Activated CD4-positive, alpha-beta memory T cell treated with anti-CD3 and anti-CD28 coated beads for 36 hours (primary cell): ENCODE measurements at regions of chrX and their contacts with region 1.

Region 1: DNA sequence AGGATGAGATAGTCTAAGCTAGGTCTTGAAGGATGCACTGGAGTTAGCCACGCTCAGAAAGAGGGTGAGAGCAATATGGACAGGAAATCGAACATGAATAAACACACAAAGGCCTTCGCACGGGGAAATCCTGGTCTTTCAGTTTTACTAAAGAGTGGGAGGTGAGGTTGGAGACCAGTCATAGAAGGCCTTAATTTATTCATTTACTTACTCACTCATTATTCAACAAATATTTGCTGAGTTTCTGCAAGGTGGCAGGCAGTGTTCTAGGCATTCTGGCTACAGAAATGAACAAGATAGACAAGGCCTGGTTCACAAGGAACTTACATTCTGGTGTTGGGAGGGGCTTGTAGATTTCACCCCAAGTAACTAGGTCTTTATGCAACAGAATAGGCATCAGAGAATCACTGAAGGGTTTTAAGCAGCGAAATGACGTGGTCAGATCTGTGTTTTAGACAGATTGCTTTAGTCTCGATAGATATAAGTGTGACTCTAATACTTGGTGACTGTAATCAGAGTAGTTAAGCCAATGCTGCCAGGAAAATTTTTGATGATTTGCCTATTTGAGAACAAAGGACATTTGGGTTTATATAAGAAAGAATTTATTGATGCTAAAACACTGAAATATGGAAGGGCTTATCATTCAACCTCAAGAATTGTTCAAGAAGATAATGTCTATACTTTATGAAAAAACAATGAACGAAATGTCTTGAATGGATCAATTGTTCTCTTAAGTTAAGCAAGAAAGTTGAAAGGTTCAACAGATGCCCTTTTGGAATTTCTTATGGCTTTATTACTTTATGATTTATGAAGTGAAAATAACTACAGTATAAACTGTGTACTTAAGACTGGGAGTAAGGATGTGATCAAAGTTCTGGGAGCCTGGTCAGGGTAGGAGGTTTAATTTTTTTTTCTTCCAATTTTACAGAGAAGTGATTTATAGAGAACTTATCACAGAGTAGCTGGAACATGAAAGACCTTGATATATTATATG is 184.4 kb upstream of the CASK start:
- DNase-seq: peak; percentile 61
- H3K4me3 Mint-ChIP-seq: no peak overlapping the region
- H3K27ac Mint-ChIP-seq: peak overlapping the region; percentile 38
- H3K4me1 Mint-ChIP-seq: peaks cover 28% of the 10 kb centered on the region
- H3K27me3 Mint-ChIP-seq: no peaks in the 10 kb centered on the region

Region 2: GRCh38 chrX:41333744-41334259 is 774.0 kb before region 1 on chrX and contains the start of gene DDX3X:
- CTCF ChIA-PET with region 1: no interaction called
- POLR2A ChIA-PET with region 1: no interaction called
- intact Hi-C with region 1: no loop called
- DNase-seq: peak; percentile 89
- H3K4me3 Mint-ChIP-seq: peak within 1 kb of the TSS; percentile 93
- H3K27ac Mint-ChIP-seq: peak within 1 kb of the TSS; percentile 100
- H3K4me1 Mint-ChIP-seq: peaks cover 17% of the 10 kb centered on the region
- H3K27me3 Mint-ChIP-seq: peaks cover 1% of the 10 kb centered on the region
- total RNA-seq, gene DDX3X: 216 to 218 TPM

Region 3: DNA sequence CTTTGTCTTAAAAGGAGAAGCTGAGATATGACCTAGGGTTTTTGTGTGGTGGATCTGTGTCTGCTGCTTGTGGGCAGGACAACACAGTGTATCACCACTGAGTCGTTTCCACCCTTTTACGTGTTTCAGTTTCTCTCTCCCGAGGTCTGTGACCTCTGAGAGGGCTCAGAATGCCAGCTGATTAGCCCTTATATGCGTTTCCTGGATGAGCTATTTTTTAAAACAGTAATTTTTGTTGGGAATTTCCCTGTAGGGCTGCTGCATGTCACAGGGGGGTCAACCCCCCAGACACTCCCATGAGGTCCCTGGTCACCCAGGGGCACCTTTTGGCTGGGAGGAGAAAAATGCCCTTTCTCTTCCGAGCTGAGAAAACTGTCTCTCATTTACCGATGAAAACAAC is 14.0 kb before region 1 on chrX:
- CTCF ChIA-PET with region 1: interaction called, 3 read pairs
- POLR2A ChIA-PET with region 1: no interaction called
- intact Hi-C with region 1: loop called (anchors 2 kb)
- DNase-seq: peak; percentile 17
- H3K4me3 Mint-ChIP-seq: no peak overlapping the region
- H3K27ac Mint-ChIP-seq: no peak overlapping the region
- H3K4me1 Mint-ChIP-seq: peaks cover 21% of the 10 kb centered on the region
- H3K27me3 Mint-ChIP-seq: no peaks in the 10 kb centered on the region

Region 4: GRCh38 chrX:42128020-42128419 is 20.2 kb after region 1 on chrX:
- CTCF ChIA-PET with region 1: no interaction called
- POLR2A ChIA-PET with region 1: no interaction called
- intact Hi-C with region 1: loop called (anchors 2 kb)
- DNase-seq: no peak
- H3K4me3 Mint-ChIP-seq: no peak overlapping the region
- H3K27ac Mint-ChIP-seq: peak overlapping the region; percentile 58
- H3K4me1 Mint-ChIP-seq: peaks cover 47% of the 10 kb centered on the region
- H3K27me3 Mint-ChIP-seq: no peaks in the 10 kb centered on the region

Region 5: DNA sequence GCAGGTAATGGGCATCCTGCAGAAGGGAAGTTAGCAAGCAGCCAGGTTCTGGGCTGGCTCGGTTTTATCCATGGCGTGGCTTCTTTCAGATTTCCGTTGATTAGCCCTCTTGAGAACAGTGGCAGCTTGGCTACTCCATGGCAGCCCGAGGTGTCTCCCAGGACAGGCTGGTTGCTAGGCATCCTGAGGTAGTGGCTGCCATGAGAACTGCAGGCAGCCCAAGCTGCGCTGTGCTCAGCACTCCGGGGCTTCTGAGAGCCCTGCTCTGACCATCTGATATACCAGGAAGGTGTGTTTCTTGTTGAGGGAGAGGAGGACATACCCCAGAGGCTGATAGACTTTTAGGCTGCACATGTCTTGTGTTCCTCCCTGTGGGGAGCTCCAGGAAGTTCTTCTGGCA is 69.0 kb after region 1 on chrX:
- CTCF ChIA-PET with region 1: no interaction called
- POLR2A ChIA-PET with region 1: no interaction called
- intact Hi-C with region 1: no loop called
- DNase-seq: no peak
- H3K4me3 Mint-ChIP-seq: no peak overlapping the region
- H3K27ac Mint-ChIP-seq: no peak overlapping the region
- H3K4me1 Mint-ChIP-seq: no peaks in the 10 kb centered on the region
- H3K27me3 Mint-ChIP-seq: no peaks in the 10 kb centered on the region

Region 6: DNA sequence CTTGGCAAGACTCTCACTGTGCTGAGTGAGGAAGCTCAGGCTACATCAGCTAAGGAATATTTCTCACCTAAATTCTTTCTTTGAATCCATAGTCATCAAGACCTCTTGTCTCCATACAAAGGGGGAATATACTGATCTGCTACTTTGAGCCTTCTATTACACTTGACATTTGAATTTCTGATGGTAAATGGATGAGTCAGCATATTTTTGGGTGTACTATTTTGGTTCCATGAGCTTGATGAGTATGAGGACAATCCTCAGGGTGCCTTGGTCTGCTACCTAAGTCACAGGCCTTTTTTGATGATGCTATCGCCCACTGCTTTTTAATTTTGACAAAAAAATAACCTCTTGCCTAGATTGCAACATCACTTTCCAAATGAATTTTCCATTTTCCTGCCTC is 254.4 kb after region 1 on chrX:
- CTCF ChIA-PET with region 1: no interaction called
- POLR2A ChIA-PET with region 1: no interaction called
- intact Hi-C with region 1: no loop called
- DNase-seq: no peak
- H3K4me3 Mint-ChIP-seq: no peak overlapping the region
- H3K27ac Mint-ChIP-seq: no peak overlapping the region
- H3K4me1 Mint-ChIP-seq: no peaks in the 10 kb centered on the region
- H3K27me3 Mint-ChIP-seq: no peaks in the 10 kb centered on the region